ENCODE measurements at regions of chrX and their contacts with region 1.

Region 1: DNA sequence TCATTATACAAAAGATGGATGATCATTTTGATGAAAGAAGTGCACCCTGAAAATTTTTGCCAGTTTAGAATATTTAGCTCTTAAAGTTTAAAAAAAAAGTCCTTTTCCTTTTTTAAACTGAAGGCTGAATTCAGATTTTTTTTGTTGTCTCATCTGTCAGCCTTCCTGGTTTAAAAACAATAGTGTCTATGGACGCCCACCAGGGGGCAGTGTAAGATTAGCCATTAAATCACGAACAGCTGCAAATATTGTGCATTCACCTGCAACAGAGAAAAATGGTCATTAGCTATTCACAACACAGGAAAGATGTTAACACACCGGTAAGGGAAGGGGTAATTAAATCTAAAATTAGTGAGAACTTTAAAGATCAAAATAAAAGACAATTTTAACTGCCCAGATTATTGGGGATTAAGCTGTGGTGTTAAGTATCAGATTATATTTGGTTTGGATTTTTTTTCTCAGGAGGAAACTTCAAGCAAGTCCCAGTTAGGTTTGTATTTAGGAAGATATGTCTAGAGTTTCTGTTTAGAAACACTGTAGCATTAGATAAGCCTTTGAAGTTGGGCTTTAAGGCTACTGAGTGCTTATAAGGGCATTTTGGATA is 4.4 kb upstream of the CXorf38 start:
- DNase-seq: peak; percentile 83
- H3K4me3 ChIP-seq: no peak overlapping the region
- H3K27ac ChIP-seq: no peak overlapping the region
- H3K4me1 ChIP-seq: peaks cover 0 to 15% (median 4%) of the 10 kb centered on the region in 6 donors
- H3K27me3 ChIP-seq: no peaks in the 10 kb centered on the region
- CTCF ChIP-seq: peak; percentile 37 to 88 (median 73)
- POLR2A ChIP-seq: no peak

Region 2: GRCh38 chrX:40755291-40756249 is 103.8 kb after region 1 on chrX:
- intact Hi-C with region 1: no loop called
- DNase-seq: no peak
- H3K4me3 ChIP-seq: no peak overlapping the region
- H3K27ac ChIP-seq: no peak overlapping the region
- H3K4me1 ChIP-seq: no peaks in the 10 kb centered on the region
- H3K27me3 ChIP-seq: peaks cover 0 to 13% (median 0%) of the 10 kb centered on the region in 7 donors
- CTCF ChIP-seq: no peak
- POLR2A ChIP-seq: no peak

Region 3: GRCh38 chrX:40792433-40792832 is 140.7 kb after region 1 on chrX:
- intact Hi-C with region 1: loop called (anchors 5 kb)
- DNase-seq: no peak
- H3K4me3 ChIP-seq: no peak overlapping the region
- H3K27ac ChIP-seq: no peak overlapping the region
- H3K4me1 ChIP-seq: peaks cover 0 to 9% (median 0%) of the 10 kb centered on the region in 6 donors
- H3K27me3 ChIP-seq: peaks cover 0 to 13% (median 0%) of the 10 kb centered on the region in 7 donors
- CTCF ChIP-seq: no peak
- POLR2A ChIP-seq: no peak

Measured in spleen (tissue), 13 donors.